ENCODE measurements at regions of chr1 and their contacts with region 1.

Region 1: DNA sequence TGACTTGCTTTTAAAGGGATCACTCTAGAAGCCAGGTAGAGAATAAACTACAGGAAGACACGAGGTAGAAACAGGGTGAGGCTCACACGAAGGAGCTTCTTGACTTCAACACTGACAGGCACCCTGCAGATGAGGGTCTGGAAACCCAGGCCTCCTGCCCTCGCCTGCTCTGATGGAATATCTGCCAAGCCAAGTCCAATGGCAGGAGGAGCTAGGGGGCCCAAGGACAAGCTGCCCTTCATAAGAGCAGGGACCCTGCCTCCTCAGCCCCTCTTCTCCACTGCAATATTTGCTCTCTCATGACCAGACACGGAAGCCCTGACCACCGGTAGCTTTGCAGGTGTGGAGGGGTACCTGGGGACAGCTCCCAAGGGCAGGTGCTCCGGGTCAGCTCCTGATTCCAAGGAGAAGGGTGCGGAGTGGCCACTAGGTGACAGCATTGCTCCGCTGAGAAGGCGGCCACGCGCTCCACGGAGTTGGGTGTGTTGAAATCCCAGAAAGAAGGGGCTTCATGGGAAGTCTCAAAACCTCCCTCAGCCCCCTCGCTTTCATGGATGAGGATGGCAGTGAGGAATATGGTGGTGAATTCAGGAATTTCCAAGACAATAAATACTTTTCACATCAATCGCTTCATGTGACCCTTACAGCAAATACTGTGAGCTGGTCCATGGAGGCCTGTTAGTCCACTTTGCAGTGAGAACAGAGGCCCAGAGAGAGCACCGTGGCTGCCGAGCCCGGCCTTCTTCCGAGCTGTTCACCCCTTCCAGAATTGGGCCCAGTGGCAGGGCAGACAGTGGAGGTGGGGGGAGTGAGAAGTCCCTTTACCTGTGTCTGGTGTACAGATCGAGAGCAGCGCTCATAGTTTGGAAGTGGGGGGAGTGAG is 33.2 kb upstream of the PAX7 start:
- DNase-seq: peak; percentile 48
- H3K4me3 Mint-ChIP-seq: no peak overlapping the region
- H3K27ac Mint-ChIP-seq: no peak overlapping the region
- H3K4me1 Mint-ChIP-seq: no peaks in the 10 kb centered on the region
- H3K27me3 Mint-ChIP-seq: peaks cover 11% of the 10 kb centered on the region

Region 2: GRCh38 chr1:18542351-18542750 is 55.0 kb before region 1 on chr1:
- CTCF ChIA-PET with region 1: no interaction called
- POLR2A ChIA-PET with region 1: no interaction called
- DNase-seq: no peak
- H3K4me3 Mint-ChIP-seq: no peak overlapping the region
- H3K27ac Mint-ChIP-seq: no peak overlapping the region
- H3K4me1 Mint-ChIP-seq: no peaks in the 10 kb centered on the region
- H3K27me3 Mint-ChIP-seq: peaks cover 18% of the 10 kb centered on the region

Region 3: DNA sequence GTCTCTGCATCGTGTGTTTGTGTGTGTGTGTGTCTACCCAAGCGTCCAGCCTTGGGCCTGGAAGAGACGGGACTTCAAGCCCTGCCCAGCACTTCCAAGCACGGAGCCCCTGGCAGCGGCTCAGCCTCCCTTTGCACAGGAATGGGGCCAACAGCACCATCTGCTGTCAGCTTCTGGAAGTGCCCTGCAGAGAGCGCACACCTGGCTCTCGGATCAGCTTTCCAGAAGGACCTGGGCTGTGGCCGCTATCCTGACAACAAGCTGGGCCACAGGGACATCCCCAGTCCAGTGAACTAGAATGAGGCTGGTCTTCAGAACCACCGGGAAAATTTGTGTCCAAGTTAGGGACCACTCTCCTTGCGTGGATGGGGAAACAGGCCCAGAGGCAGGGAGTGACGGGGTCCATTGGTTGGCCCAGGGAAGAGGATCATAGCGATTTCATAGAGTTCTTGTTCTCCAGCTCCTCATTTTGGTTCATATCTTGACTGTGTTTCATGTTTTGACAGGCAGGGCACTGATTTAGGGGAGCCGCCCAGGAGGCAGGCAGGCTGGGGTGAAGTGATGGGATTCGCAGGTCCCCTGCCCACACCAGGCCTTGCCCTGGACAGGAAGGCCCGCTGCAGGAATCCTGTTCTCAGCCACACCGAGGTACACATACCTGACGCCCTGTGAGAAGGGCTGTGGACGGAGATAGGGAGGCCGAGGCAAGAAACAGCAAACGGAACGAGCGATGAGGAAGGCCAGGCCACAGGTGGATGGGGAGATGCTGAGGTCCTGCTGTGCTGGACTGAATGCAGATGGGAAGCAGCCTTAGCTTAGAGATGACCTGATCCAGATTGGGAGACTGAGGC is 223.6 kb after region 1 on chr1:
- CTCF ChIA-PET with region 1: interaction called, 11 read pairs
- POLR2A ChIA-PET with region 1: no interaction called
- DNase-seq: peak; percentile 62
- H3K4me3 Mint-ChIP-seq: no peak overlapping the region
- H3K27ac Mint-ChIP-seq: no peak overlapping the region
- H3K4me1 Mint-ChIP-seq: no peaks in the 10 kb centered on the region
- H3K27me3 Mint-ChIP-seq: peaks cover 25% of the 10 kb centered on the region